ENCODE measurements at regions of chr3 and their contacts with region 1.

Region 1: GRCh38 chr3:128617557-128618397 is 32.8 kb downstream of the RPN1 start:
- DNase-seq: peak; percentile 97 to 100 (median 99)
- ATAC-seq: peak; percentile 95
- H3K4me3 ChIP-seq: peak overlapping the region; percentile 70 to 85
- H3K4me3 Mint-ChIP-seq: peak overlapping the region; percentile 93
- H3K27ac ChIP-seq: peak overlapping the region; percentile 78 to 88
- H3K27ac Mint-ChIP-seq: peak overlapping the region; percentile 96
- H3K4me1 ChIP-seq: peaks cover 16% of the 10 kb centered on the region
- H3K4me1 Mint-ChIP-seq: peaks cover 28% of the 10 kb centered on the region
- H3K27me3 ChIP-seq: no peaks in the 10 kb centered on the region
- H3K27me3 Mint-ChIP-seq: no peaks in the 10 kb centered on the region
- CTCF ChIP-seq: peak; percentile 92

Region 2: DNA sequence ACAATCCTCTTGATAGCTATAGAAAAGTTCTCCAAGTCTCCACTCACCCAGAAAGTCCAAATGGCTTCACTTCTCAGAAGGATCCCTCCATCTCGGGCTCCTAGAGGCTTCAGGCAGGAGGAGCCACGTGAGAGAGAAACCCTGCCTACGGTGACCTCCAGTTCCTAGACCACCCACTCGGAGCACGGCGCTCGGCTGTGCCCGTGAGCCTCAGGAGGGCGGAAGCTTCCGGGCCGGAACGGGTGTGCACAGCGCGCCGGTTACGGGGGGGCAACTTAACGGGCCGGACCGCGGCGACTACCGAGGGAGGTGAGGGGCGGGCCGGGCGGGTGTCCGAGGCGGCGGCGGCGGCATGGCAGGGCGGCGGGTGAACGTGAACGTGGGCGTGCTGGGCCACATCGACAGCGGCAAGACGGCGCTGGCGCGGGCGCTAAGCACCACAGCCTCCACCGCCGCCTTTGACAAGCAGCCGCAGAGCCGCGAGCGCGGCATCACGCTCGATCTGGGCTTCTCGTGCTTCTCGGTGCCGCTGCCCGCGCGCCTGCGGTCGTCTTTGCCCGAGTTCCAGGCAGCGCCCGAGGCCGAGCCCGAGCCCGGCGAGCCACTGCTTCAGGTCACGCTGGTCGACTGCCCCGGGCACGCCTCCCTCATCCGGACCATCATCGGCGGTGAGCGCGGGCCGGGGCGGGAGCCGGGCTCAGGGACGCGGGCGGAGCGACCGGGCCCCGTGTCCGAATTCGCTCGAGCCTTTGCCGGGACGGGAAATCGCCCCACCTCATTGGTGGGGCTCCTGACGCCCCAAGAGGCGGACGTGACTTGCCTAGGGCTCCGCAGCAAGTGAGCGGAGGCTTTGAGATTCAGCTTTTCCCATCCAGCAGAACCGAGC is 464.4 kb before region 1 on chr3 and contains the start of gene EEFSEC:
- CTCF ChIA-PET with region 1: no interaction called
- POLR2A ChIA-PET with region 1: no interaction called
- intact Hi-C with region 1: loop called in 1 of 2 experiments (anchors 10 kb)
- DNase-seq: peak; percentile 77 to 92 (median 84)
- ATAC-seq: peak; percentile 90
- H3K4me3 ChIP-seq: peak within 1 kb of the TSS; percentile 61 to 74
- H3K4me3 Mint-ChIP-seq: peak within 1 kb of the TSS; percentile 87
- H3K27ac ChIP-seq: peak within 1 kb of the TSS; percentile 65 to 77
- H3K27ac Mint-ChIP-seq: peak within 1 kb of the TSS; percentile 89
- H3K4me1 ChIP-seq: peaks cover 14% of the 10 kb centered on the region
- H3K4me1 Mint-ChIP-seq: peaks cover 42% of the 10 kb centered on the region
- H3K27me3 ChIP-seq: no peaks in the 10 kb centered on the region
- H3K27me3 Mint-ChIP-seq: no peaks in the 10 kb centered on the region
- CTCF ChIP-seq: no peak
- total RNA-seq, gene EEFSEC: 10.8 to 11.6 TPM

Region 3: DNA sequence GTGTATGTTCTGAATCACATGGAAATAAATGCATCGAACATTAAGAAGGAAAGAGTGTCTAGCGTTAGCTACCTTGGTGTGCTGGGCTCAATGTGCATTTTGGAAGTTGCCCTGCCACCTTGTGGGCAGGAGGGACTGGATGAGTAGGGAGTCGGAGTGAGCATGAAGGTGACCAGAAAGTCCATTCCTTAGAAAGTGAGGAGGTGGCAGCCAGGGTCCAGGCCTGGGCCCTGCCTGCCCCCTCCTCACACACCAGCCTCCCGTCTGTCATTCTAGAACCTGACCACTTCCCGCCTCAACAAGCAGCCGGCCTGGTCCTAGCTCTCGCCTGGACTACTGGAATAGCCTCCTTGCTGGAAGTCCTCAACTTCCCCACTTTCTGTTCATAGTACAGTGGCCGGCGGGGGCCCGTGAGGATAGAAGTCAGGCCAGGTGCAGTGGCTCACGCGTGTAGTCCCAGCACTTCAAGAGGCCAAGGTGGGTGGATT is 114.6 kb before region 1 on chr3:
- CTCF ChIA-PET with region 1: no interaction called
- POLR2A ChIA-PET with region 1: no interaction called
- intact Hi-C with region 1: no loop called
- DNase-seq: peak in 1 of 9 experiments; percentile 7
- ATAC-seq: no peak
- H3K4me3 ChIP-seq: no peak overlapping the region
- H3K4me3 Mint-ChIP-seq: no peak overlapping the region
- H3K27ac ChIP-seq: no peak overlapping the region
- H3K27ac Mint-ChIP-seq: no peak overlapping the region
- H3K4me1 ChIP-seq: no peaks in the 10 kb centered on the region
- H3K4me1 Mint-ChIP-seq: no peaks in the 10 kb centered on the region
- H3K27me3 ChIP-seq: no peaks in the 10 kb centered on the region
- H3K27me3 Mint-ChIP-seq: peaks cover 37% of the 10 kb centered on the region
- CTCF ChIP-seq: no peak

Region 4: GRCh38 chr3:128680602-128681368 is 63.0 kb after region 1 on chr3:
- CTCF ChIA-PET with region 1: interaction called, 13 read pairs
- POLR2A ChIA-PET with region 1: interaction called, 10 read pairs
- intact Hi-C with region 1: loop called (anchors 1 kb)
- DNase-seq: peak; percentile 95 to 98 (median 97)
- ATAC-seq: peak; percentile 89
- H3K4me3 ChIP-seq: peak overlapping the region; percentile 70 to 82
- H3K4me3 Mint-ChIP-seq: peak overlapping the region; percentile 90
- H3K27ac ChIP-seq: peak overlapping the region; percentile 93 to 98
- H3K27ac Mint-ChIP-seq: peak overlapping the region; percentile 99
- H3K4me1 ChIP-seq: peaks cover 14% of the 10 kb centered on the region
- H3K4me1 Mint-ChIP-seq: peaks cover 29% of the 10 kb centered on the region
- H3K27me3 ChIP-seq: no peaks in the 10 kb centered on the region
- H3K27me3 Mint-ChIP-seq: no peaks in the 10 kb centered on the region
- CTCF ChIP-seq: peak; percentile 86

Region 5: GRCh38 chr3:128804017-128804810 is 186.4 kb after region 1 on chr3:
- CTCF ChIA-PET with region 1: interaction called, 6 read pairs
- POLR2A ChIA-PET with region 1: no interaction called
- intact Hi-C with region 1: loop called in 1 of 2 experiments (anchors 2 kb)
- DNase-seq: peak in 8 of 9 experiments; percentile 26 to 92 (median 56)
- ATAC-seq: peak; percentile 95
- H3K4me3 ChIP-seq: peak overlapping the region; percentile 21 to 36
- H3K4me3 Mint-ChIP-seq: peak overlapping the region; percentile 75
- H3K27ac ChIP-seq: peak overlapping the region; percentile 66 to 84
- H3K27ac Mint-ChIP-seq: peak overlapping the region; percentile 97
- H3K4me1 ChIP-seq: peaks cover 49% of the 10 kb centered on the region
- H3K4me1 Mint-ChIP-seq: peaks cover 69% of the 10 kb centered on the region
- H3K27me3 ChIP-seq: no peaks in the 10 kb centered on the region
- H3K27me3 Mint-ChIP-seq: no peaks in the 10 kb centered on the region
- CTCF ChIP-seq: no peak

Region 6: DNA sequence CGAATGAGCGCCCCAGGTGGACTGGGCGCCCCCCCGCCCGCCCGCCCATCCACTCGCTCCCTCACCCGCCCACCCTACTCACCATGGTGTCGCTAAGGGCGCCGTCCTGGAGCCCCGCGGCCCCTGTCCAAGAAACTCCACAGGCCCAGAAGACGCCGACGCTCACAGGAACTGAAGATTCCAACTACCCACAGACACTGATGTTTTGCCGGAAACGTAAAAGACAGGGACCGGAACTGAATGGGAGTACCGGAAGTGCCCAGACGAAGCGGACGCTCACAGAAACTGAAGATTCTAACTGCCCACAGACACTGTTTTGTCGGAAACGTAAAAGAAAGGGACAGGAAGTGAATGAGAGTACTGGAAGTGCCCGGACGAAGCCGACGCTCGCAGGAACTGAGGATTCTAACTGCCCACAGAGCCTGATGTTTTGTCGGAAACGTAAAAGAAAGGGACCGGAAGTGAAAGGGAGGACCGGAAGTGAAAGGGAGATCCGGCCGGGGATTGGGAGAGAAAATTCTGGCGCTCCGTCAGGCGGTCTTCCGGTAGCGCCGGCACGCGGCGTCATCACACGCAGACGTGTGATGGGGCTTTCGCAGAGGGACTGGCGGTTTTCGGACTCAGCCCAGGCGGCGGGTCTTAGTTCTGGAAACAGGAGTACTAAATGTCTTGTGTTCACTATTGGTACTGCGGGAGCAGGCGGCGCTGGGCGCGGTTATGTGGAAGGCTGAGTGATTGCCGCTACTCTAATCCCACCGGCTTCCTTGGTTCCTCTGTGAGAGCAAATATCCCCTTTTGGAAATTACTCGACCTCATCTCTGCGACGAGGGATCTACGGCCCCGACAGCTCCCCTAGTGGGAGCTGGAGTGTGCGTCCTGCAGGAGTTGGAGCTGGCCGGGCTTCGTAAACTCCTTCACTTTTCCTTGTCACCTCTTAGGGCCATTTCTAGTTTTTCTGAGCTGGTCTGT is 543.4 kb after region 1 on chr3 and contains the start of gene ISY1:
- CTCF ChIA-PET with region 1: no interaction called
- POLR2A ChIA-PET with region 1: no interaction called
- intact Hi-C with region 1: loop called in 1 of 2 experiments (anchors 1 kb)
- DNase-seq: peak; percentile 71 to 97 (median 86)
- ATAC-seq: peak; percentile 80
- H3K4me3 ChIP-seq: peak within 1 kb of the TSS; percentile 84 to 94
- H3K4me3 Mint-ChIP-seq: peak within 1 kb of the TSS; percentile 95
- H3K27ac ChIP-seq: peak within 1 kb of the TSS; percentile 92 to 99
- H3K27ac Mint-ChIP-seq: peak within 1 kb of the TSS; percentile 96
- H3K4me1 ChIP-seq: peaks cover 18% of the 10 kb centered on the region
- H3K4me1 Mint-ChIP-seq: peaks cover 43% of the 10 kb centered on the region
- H3K27me3 ChIP-seq: no peaks in the 10 kb centered on the region
- H3K27me3 Mint-ChIP-seq: no peaks in the 10 kb centered on the region
- CTCF ChIP-seq: peak; percentile 70
- total RNA-seq, gene ISY1: 35.2 to 38.7 TPM

Measured in CD8-positive, alpha-beta T cell (primary cell).